ENCODE measurements at regions of chr5 and their contacts with region 1.

Region 1: GRCh38 chr5:74127381-74128320 is 501.7 kb downstream of the ARHGEF28 start:
- DNase-seq: peak in 1 of 2 experiments; percentile 25
- H3K4me3 ChIP-seq: no peak overlapping the region
- H3K27ac ChIP-seq: no peak overlapping the region
- H3K4me1 ChIP-seq: 0 out of 2 replicates have a peak, but pooled peaks cover 13% of the 10 kb centered on the region
- H3K27me3 ChIP-seq: no peaks in the 10 kb centered on the region
- CTCF ChIP-seq: peak; percentile 32; the same call in 1 of the 2 replicates

Region 2: GRCh38 chr5:73892806-73893205 is 234.8 kb before region 1 on chr5:
- CTCF ChIA-PET with region 1: no interaction called
- POLR2A ChIA-PET with region 1: no interaction called
- intact Hi-C with region 1: no loop called
- DNase-seq: no peak
- H3K4me3 ChIP-seq: no peak overlapping the region
- H3K27ac ChIP-seq: no peak overlapping the region
- H3K4me1 ChIP-seq: no peaks in the 10 kb centered on the region
- H3K27me3 ChIP-seq: no peaks in the 10 kb centered on the region
- CTCF ChIP-seq: no peak

Region 3: DNA sequence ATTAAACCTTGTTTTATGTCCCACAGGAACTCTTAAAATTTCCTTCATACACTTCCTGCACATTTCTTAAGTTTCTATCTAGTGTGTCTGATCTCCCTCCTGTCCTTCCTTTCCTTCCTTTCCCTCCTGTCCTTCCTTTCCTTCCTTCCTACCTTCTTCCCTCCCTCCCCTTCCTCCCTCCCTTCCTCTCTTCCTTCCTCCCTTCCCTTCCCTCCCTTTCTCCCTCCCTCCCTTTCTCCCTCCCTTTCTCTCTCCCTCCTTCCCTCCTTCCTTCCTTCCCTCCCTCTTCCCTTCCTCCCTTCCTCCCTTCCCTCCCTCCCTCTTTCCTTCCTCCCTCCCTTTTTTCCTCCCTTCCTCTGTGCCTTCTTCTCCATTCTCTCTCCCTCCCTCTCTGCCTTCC is 97.9 kb after region 1 on chr5:
- CTCF ChIA-PET with region 1: no interaction called
- POLR2A ChIA-PET with region 1: interaction called, 12 read pairs
- intact Hi-C with region 1: no loop called
- DNase-seq: no peak
- H3K4me3 ChIP-seq: no peak overlapping the region
- H3K27ac ChIP-seq: no peak overlapping the region
- H3K4me1 ChIP-seq: no peaks in the 10 kb centered on the region
- H3K27me3 ChIP-seq: no peaks in the 10 kb centered on the region
- CTCF ChIP-seq: no peak

Region 4: DNA sequence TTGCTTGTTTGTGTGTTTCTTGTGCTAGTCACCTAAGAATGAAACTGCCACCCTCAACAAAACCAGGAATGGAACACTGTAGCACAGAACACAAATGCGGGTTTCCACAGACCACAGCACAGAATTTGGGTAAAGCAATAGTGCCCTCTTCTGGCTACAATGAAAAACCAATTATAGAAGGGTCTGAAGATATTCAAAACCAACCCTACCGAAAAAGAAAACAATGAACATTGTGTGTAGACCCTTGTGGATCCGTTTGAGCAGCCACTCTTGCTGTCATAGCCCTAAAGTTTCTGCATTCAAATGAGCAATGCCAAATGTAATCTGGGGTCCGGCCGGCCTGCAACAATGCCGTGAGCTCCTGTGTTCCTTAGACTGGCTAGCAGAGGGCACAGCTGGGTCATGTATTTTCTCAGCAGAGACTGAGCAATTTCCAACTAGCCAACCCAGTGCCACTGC is 521.2 kb after region 1 on chr5:
- CTCF ChIA-PET with region 1: no interaction called
- POLR2A ChIA-PET with region 1: no interaction called
- intact Hi-C with region 1: loop called (anchors 2 kb)
- DNase-seq: peak in 1 of 2 experiments; percentile 57
- H3K4me3 ChIP-seq: no peak overlapping the region
- H3K27ac ChIP-seq: no peak overlapping the region
- H3K4me1 ChIP-seq: peaks cover 23% of the 10 kb centered on the region
- H3K27me3 ChIP-seq: no peaks in the 10 kb centered on the region
- CTCF ChIP-seq: peak; percentile 83